ENCODE measurements at regions of chr9 and their contacts with region 1.

Region 1: DNA sequence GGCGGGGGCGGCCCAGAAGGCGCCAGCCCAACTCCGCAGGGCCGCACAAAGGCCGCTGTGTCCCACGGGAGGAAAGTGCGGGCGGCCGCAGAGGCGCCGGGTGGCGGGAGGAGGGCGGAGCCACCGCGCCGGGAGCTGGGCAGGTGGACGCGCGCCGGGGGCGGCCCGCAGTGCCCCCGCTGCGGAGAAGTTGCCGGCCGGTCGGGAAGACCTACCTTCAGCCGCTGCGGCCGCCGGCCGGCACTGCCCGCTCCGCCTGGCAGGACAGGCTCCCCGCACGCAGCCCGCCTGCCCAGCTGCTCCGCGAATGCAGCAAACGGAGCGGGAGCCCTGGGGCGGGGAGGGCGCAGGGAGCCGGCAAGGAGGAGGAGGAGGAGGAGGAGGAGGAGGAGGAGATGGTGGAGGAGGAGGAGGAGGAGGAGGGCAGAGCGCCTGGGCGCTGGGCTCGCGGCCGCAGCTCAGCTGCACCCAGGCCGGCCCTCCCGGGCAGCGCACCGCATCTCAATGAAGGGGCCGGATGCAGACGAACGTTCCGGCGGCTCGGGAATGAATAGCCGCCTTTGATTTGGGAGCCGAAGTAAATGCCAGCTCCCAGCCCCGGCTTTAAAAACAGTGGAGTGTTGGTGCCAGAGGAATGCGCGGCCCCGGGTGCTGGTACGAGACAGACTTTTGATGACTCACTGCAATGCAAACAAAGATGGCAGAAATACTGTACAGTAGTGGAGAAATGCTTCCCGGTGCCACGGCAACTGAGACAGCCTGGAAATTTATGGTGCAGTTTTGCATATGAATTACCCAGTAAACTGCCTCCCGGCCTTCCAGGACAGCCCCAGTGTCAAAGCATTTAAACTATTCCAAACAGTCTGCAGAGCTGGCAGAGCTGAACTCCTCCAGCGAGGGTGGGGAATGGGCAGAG is 43.3 kb downstream of the NACC2 start:
- DNase-seq: peak; percentile 96
- H3K4me3 ChIP-seq: peak overlapping the region; percentile 49 to 66 (median 53)
- H3K27ac ChIP-seq: peak overlapping the region; percentile 66
- H3K4me1 ChIP-seq: peaks cover 33% of the 10 kb centered on the region
- H3K27me3 ChIP-seq: no peaks in the 10 kb centered on the region
- CTCF ChIP-seq: no peak
- POLR2A ChIP-seq: peak; percentile 47

Region 2: GRCh38 chr9:135907431-135908092 is 144.2 kb before region 1 on chr9 and contains the start of gene CAMSAP1:
- CTCF ChIA-PET with region 1: no interaction called
- POLR2A ChIA-PET with region 1: no interaction called
- dilution Hi-C with region 1: no loop called
- intact Hi-C with region 1: loop called (anchors 2 kb)
- DNase-seq: peak; percentile 95
- H3K4me3 ChIP-seq: peak within 1 kb of the TSS; percentile 42 to 84 (median 73)
- H3K27ac ChIP-seq: peak within 1 kb of the TSS; percentile 45
- H3K4me1 ChIP-seq: peaks cover 36% of the 10 kb centered on the region
- H3K27me3 ChIP-seq: no peaks in the 10 kb centered on the region
- CTCF ChIP-seq: no peak
- POLR2A ChIP-seq: peak; percentile 45
- total RNA-seq, gene CAMSAP1: 25.5 and 30.6 TPM in 2 replicates

Region 3: DNA sequence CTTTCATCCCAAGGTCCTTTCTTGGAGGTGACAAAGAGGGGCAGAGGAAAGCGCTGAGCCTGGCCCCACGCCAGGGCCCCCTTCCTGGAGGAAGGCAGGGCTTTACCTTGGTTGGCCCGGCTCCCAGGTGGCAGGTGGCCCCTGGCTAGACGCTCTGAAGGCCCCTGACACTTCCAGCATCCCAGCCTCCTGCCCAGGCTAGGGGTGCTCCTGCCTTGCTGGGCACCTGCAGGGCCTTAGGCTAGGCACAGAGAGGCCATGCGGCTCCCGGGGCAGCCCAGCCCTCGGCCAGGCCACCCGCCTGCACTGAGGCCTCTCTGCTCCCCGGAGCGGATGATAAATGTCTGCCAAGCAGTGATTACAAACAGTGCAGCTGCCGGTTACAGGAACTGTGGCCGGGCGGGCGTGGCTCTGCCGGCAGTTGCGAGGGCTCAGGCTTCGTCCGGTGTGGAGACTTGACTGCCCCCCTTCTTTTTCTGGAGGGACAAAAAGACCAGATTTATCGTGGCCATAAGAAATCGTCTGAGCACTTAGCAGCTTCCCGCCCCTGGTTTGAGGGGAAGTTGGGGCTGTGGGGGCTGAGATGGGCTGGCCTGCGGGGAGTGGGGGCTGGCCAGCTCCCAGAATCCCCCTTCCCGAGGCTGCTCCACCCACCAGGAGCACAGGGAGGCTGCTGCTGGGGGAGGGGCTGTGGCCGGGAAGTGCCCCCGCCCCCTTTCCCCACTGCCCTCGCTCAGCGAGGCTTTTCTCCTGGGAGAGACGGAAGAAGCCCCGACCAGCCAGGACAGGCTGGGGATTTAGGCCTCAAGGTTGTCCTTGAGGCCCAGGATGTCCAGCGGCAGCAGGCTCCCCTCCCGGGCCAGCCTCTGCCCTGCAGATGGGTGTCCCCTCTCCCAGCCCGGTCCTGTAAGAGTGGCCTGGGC is 59.0 kb before region 1 on chr9:
- CTCF ChIA-PET with region 1: no interaction called
- POLR2A ChIA-PET with region 1: no interaction called
- dilution Hi-C with region 1: no loop called
- intact Hi-C with region 1: loop called (anchors 5 kb)
- DNase-seq: peak; percentile 81
- H3K4me3 ChIP-seq: no peak overlapping the region
- H3K27ac ChIP-seq: peak overlapping the region; percentile 86
- H3K4me1 ChIP-seq: peaks cover 22% of the 10 kb centered on the region
- H3K27me3 ChIP-seq: no peaks in the 10 kb centered on the region
- CTCF ChIP-seq: no peak
- POLR2A ChIP-seq: peak; percentile 69

Region 4: DNA sequence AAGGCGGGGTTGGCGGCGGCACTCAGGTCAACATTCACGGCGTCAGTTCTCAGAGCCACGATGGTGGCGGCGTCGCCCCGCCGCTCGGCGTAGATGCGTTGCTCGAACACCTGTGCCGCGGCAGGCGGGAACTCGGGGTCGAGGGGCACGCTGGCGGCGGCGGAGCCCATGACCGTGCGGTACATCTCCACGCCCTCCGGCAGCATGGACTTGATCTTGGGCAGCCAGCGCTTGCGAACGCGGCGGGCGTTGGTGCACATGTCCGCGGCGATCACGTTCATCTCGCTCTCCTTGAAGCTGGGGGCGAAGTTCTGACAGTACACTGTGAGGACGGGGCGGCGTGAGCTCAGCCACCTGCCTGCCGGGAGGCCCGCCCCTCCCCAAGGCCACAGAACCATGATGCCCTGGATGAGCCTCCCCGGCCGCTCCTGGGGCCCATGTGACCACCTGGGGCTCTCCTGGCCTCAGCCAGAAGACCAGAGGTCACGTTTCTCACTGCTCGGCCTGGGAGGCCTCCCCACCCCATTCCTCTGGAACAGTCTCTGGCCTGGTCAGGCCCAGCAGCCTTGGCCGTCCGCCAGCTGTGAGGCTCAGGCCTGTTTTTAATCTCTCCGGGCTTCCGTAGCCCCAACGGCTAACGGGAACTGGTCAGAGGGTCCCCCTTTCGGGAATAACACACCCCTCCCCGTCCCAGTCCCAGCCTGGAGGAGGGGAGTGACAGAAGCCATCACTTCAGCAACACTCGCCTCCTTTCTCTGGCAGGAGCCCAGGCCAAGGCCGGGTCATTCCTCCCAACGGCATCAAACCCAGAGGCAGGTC is 39.9 kb before region 1 on chr9:
- CTCF ChIA-PET with region 1: interaction called, 3 read pairs
- POLR2A ChIA-PET with region 1: no interaction called
- dilution Hi-C with region 1: no loop called
- intact Hi-C with region 1: loop called (anchors 1 kb)
- DNase-seq: peak; percentile 70
- H3K4me3 ChIP-seq: no peak overlapping the region
- H3K27ac ChIP-seq: peak overlapping the region; percentile 76
- H3K4me1 ChIP-seq: peaks cover 54% of the 10 kb centered on the region
- H3K27me3 ChIP-seq: no peaks in the 10 kb centered on the region
- CTCF ChIP-seq: no peak
- POLR2A ChIP-seq: no peak

Region 5: GRCh38 chr9:136093995-136094881 is 42.5 kb after region 1 on chr9:
- CTCF ChIA-PET with region 1: interaction called, 8 read pairs
- POLR2A ChIA-PET with region 1: no interaction called
- dilution Hi-C with region 1: no loop called
- intact Hi-C with region 1: loop called (anchors 2 kb)
- DNase-seq: peak; percentile 33
- H3K4me3 ChIP-seq: peak overlapping the region; percentile 58 to 86 (median 68)
- H3K27ac ChIP-seq: peak overlapping the region; percentile 64
- H3K4me1 ChIP-seq: peaks cover 19% of the 10 kb centered on the region
- H3K27me3 ChIP-seq: no peaks in the 10 kb centered on the region
- CTCF ChIP-seq: no peak
- POLR2A ChIP-seq: peak; percentile 17

Measured in endothelial cell of umbilical vein (primary cell).